Motor neuron (in vitro differentiated cells): ENCODE measurements at regions of chr10 and their contacts with region 1.

Region 1: GRCh38 chr10:100433253-100434240 is 29.3 kb upstream of the WNT8B start:
- ATAC-seq: peak; percentile 93 to 100 (median 99)
- H3K4me3 ChIP-seq: no peak overlapping the region
- H3K27ac ChIP-seq: no peak overlapping the region
- H3K4me1 ChIP-seq: no peaks in the 10 kb centered on the region

Region 2: DNA sequence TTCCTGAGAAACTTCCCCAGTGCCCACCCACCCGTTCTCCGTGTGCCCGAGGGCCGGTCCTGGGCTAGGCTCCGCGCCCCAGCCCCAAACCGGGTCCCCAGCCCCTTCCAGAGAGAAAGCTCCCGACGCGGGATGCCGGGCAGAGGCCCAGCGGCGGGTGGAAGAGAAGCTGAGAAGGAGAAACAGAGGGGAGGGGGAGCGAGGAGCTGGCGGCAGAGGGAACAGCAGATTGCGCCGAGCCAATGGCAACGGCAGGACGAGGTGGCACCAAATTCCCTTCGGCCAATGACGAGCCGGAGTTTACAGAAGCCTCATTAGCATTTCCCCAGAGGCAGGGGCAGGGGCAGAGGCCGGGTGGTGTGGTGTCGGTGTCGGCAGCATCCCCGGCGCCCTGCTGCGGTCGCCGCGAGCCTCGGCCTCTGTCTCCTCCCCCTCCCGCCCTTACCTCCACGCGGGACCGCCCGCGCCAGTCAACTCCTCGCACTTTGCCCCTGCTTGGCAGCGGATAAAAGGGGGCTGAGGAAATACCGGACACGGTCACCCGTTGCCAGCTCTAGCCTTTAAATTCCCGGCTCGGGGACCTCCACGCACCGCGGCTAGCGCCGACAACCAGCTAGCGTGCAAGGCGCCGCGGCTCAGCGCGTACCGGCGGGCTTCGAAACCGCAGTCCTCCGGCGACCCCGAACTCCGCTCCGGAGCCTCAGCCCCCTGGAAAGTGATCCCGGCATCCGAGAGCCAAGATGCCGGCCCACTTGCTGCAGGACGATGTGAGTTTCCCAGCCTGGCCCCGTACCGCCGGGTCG is 86.6 kb before region 1 on chr10 and contains the start of gene SCD:
- in situ Hi-C with region 1: loop called (anchors 10 to 25 kb)
- ATAC-seq: peak; percentile 83 to 90 (median 86)
- H3K4me3 ChIP-seq: peak within 1 kb of the TSS; percentile 67 to 87 (median 82)
- H3K27ac ChIP-seq: peak within 1 kb of the TSS; percentile 96 to 99
- H3K4me1 ChIP-seq: peaks cover 35 to 40% of the 10 kb centered on the region in 2 donors
- total RNA-seq, gene SCD: 100 to 535 (median 198) TPM